ENCODE measurements at regions of chr3 and their contacts with region 1.

Region 1: GRCh38 chr3:121995161-121996137 is 26.6 kb downstream of the ILDR1 start:
- DNase-seq: peak; percentile 20 to 51 (median 27)
- ATAC-seq: peak; percentile 96
- H3K4me3 ChIP-seq: no peak overlapping the region
- H3K27ac ChIP-seq: no peak overlapping the region
- H3K4me1 ChIP-seq: peaks cover 0 to 5% of the 10 kb centered on the region in 2 experiments; a peak in 1 of 5 replicates
- H3K27me3 ChIP-seq: no peaks in the 10 kb centered on the region; a peak in 1 of 5 replicates
- CTCF ChIP-seq: peak; percentile 65 to 84 (median 67)
- EP300 ChIP-seq: no peak
- POLR2A ChIP-seq: no peak
- RAD21 ChIP-seq: peak; percentile 10 to 56; a peak in 2 of 4 replicates

Region 2: DNA sequence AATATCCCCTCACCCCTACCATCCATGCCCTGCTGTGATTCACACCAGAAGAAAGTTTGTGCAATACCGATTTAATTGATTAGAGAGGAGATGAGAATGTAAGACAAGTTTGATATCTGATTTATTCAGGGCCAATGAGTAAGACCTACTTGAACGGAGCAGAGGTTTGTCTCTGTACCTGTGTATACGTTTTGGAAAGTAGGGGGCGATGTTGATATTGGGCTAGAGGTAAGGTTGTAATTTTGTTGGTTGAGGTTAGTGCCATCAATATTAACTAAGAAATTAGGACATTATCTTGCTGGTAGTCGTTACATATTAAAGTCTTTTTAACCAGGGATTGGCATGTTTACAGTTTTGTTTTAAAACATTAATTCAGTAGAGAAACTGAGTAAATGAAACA is 139.9 kb before region 1 on chr3:
- CTCF ChIA-PET with region 1: no interaction called
- POLR2A ChIA-PET with region 1: no interaction called
- in situ Hi-C with region 1: no loop called
- intact Hi-C with region 1: loop called (anchors 10 kb)
- DNase-seq: peak in 2 of 4 experiments; percentile 9 to 18
- ATAC-seq: peak; percentile 56; the same call in 1 of the 3 replicates
- H3K4me3 ChIP-seq: no peak overlapping the region
- H3K27ac ChIP-seq: no peak overlapping the region
- H3K4me1 ChIP-seq: no peaks in the 10 kb centered on the region
- H3K27me3 ChIP-seq: no peaks in the 10 kb centered on the region
- CTCF ChIP-seq: peak; percentile 4 to 46 (median 19); a peak in 2 of 6 replicates
- EP300 ChIP-seq: no peak
- POLR2A ChIP-seq: no peak
- RAD21 ChIP-seq: peak in 1 of 2 experiments; percentile 42; a peak in 2 of 4 replicates

Region 3: DNA sequence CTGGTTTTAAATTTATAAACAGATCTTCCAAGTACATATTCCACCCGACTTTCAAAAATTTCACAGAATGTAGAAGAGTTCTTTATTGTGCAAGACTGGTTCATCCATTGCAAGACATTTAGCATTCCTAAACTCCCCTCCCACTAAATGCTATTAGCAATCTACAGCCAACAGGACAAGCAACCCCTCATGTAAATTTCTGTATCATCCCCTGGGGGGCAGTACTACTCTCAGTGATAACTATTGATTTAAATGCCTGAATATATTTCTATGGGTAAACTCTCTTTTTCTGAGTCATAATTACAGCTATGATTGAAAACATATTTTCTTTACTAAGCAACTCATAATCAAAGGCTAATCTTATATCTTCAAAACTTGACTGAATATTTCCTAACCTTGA is 111.9 kb before region 1 on chr3:
- CTCF ChIA-PET with region 1: no interaction called
- POLR2A ChIA-PET with region 1: no interaction called
- in situ Hi-C with region 1: no loop called
- intact Hi-C with region 1: loop called (anchors 10 kb)
- DNase-seq: peak; percentile 10 to 24 (median 18)
- ATAC-seq: peak; percentile 72
- H3K4me3 ChIP-seq: no peak overlapping the region
- H3K27ac ChIP-seq: no peak overlapping the region
- H3K4me1 ChIP-seq: no peaks in the 10 kb centered on the region
- H3K27me3 ChIP-seq: no peaks in the 10 kb centered on the region
- CTCF ChIP-seq: peak; percentile 28 to 47 (median 36); a peak in 3 of 6 replicates
- EP300 ChIP-seq: no peak
- POLR2A ChIP-seq: no peak
- RAD21 ChIP-seq: peak in 1 of 2 experiments; percentile 49; a peak in 2 of 4 replicates

Region 4: GRCh38 chr3:122101646-122102045 is 106.2 kb after region 1 on chr3:
- CTCF ChIA-PET with region 1: no interaction called
- POLR2A ChIA-PET with region 1: no interaction called
- in situ Hi-C with region 1: no loop called
- intact Hi-C with region 1: no loop called
- DNase-seq: peak in 2 of 4 experiments; percentile 24 to 51
- ATAC-seq: peak; percentile 73
- H3K4me3 ChIP-seq: no peak overlapping the region
- H3K27ac ChIP-seq: no peak overlapping the region
- H3K4me1 ChIP-seq: no peaks in the 10 kb centered on the region
- H3K27me3 ChIP-seq: no peaks in the 10 kb centered on the region; a peak in 1 of 5 replicates
- CTCF ChIP-seq: peak; percentile 27 to 70 (median 51); a peak in 4 of 6 replicates
- EP300 ChIP-seq: no peak
- POLR2A ChIP-seq: no peak
- RAD21 ChIP-seq: peak; percentile 67 to 84

Region 5: GRCh38 chr3:122169908-122170307 is 174.5 kb after region 1 on chr3:
- CTCF ChIA-PET with region 1: no interaction called
- POLR2A ChIA-PET with region 1: no interaction called
- in situ Hi-C with region 1: no loop called
- intact Hi-C with region 1: no loop called
- DNase-seq: no peak
- ATAC-seq: no peak
- H3K4me3 ChIP-seq: no peak overlapping the region
- H3K27ac ChIP-seq: no peak overlapping the region
- H3K4me1 ChIP-seq: no peaks in the 10 kb centered on the region
- H3K27me3 ChIP-seq: no peaks in the 10 kb centered on the region
- CTCF ChIP-seq: no peak
- EP300 ChIP-seq: no peak
- POLR2A ChIP-seq: no peak
- RAD21 ChIP-seq: no peak

Region 6: GRCh38 chr3:122298239-122298638 is 302.8 kb after region 1 on chr3:
- CTCF ChIA-PET with region 1: no interaction called
- POLR2A ChIA-PET with region 1: no interaction called
- in situ Hi-C with region 1: no loop called
- intact Hi-C with region 1: no loop called
- DNase-seq: no peak
- ATAC-seq: no peak
- H3K4me3 ChIP-seq: no peak overlapping the region
- H3K27ac ChIP-seq: no peak overlapping the region
- H3K4me1 ChIP-seq: no peaks in the 10 kb centered on the region
- H3K27me3 ChIP-seq: no peaks in the 10 kb centered on the region; a peak in 1 of 5 replicates
- CTCF ChIP-seq: no peak
- EP300 ChIP-seq: no peak
- POLR2A ChIP-seq: no peak
- RAD21 ChIP-seq: no peak

Measured in K562 (cell line).